ENCODE measurements at regions of chr17 and their contacts with region 1.

Region 1: DNA sequence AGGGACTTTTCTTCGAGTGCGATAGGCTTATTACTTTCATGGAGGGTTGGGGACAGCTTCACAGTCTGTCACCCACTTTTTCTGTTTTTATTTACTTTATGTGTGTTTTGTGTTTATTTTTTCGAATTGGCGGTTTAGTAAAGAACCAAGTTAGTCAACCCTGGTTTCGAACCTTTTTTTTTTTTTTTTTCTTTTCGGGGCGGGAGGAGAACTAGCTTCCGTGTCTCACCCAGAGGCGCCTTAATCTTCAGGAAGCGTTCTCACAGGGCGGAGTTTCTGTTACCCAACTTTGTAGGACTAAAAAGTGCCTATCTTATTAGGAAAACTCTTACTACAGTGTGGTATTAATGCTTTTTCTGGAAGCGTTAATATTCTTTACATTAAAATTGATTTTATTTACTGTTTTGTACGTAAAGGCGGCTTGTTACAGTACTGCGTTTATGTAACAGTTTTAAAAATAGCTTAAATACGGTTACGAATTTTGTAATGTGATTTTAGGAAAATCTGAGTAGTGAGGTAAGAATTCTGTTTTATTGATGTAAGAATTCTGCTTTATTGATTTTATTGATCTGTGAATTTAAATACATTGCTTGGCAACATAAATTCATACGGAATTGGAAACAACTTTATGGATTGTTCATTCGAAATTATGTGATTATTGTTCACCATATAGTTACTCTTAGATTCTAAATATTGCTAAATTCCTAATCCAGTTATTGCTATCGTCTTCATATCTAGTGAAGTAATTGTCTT is 885 bp downstream of the ZNF207 start:
- DNase-seq: peak; percentile 62
- ATAC-seq: peak; percentile 1; the same call in 1 of the 2 replicates
- H3K4me3 ChIP-seq: peak overlapping the region; percentile 78
- H3K27ac ChIP-seq: peak overlapping the region; percentile 94
- H3K4me1 ChIP-seq: peaks cover 6% of the 10 kb centered on the region
- H3K27me3 ChIP-seq: no peaks in the 10 kb centered on the region
- CTCF ChIP-seq: no peak
- POLR2A ChIP-seq: no peak
- RAD21 ChIP-seq: no peak

Region 2: DNA sequence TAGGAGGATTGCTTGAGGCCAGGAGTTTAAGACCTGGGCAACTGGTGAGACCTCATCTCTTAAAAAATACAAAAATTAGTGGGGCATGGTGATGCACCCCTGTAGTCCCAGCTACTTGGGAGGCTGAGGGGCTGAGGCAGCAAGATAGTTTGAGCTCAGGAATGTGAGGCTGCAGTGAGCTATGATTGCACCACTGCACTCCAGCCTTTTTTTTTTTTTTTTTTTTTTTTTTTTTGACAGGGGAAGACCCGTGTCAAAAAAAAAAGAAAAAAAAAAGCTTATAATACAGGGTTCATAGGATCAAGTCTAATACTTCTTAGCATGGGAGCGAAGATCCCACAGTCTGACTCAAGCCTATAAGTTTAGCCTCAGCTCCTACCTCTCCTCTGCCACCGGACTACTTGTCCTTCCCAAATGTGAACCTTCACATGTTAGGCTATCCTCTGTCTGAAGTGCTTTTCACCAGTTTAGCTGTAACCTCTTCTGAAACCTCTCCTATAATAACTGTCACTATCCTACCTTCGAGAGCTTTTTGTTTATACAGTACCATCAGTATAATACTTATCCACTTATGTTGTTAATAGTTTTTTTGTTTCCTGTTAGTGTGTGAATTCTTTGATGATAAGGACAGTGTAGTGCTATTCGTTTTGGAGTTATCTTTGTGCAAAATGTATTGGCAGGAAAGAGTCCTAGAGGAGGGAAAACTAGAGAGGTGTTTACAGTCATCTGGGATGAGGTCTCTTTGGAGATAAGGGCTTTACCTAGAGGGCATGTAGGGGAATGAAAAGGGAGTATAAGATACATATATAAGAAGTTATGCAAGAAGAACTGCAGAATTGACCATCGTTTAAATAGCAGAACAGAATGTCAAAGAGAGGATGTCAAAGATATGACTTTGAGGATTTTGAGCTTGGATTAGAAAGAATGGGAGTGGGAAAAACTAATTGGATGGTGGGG is 1956.7 kb before region 1 on chr17:
- CTCF ChIA-PET with region 1: no interaction called
- POLR2A ChIA-PET with region 1: interaction called, 10 read pairs
- dilution Hi-C with region 1: no loop called
- in situ Hi-C with region 1: no loop called
- intact Hi-C with region 1: no loop called
- DNase-seq: no peak
- ATAC-seq: no peak
- H3K4me3 ChIP-seq: no peak overlapping the region
- H3K27ac ChIP-seq: no peak overlapping the region
- H3K4me1 ChIP-seq: peaks cover 1% of the 10 kb centered on the region; the same call in 1 of the 2 replicates
- H3K27me3 ChIP-seq: no peaks in the 10 kb centered on the region
- CTCF ChIP-seq: no peak
- POLR2A ChIP-seq: no peak
- RAD21 ChIP-seq: no peak

Region 3: DNA sequence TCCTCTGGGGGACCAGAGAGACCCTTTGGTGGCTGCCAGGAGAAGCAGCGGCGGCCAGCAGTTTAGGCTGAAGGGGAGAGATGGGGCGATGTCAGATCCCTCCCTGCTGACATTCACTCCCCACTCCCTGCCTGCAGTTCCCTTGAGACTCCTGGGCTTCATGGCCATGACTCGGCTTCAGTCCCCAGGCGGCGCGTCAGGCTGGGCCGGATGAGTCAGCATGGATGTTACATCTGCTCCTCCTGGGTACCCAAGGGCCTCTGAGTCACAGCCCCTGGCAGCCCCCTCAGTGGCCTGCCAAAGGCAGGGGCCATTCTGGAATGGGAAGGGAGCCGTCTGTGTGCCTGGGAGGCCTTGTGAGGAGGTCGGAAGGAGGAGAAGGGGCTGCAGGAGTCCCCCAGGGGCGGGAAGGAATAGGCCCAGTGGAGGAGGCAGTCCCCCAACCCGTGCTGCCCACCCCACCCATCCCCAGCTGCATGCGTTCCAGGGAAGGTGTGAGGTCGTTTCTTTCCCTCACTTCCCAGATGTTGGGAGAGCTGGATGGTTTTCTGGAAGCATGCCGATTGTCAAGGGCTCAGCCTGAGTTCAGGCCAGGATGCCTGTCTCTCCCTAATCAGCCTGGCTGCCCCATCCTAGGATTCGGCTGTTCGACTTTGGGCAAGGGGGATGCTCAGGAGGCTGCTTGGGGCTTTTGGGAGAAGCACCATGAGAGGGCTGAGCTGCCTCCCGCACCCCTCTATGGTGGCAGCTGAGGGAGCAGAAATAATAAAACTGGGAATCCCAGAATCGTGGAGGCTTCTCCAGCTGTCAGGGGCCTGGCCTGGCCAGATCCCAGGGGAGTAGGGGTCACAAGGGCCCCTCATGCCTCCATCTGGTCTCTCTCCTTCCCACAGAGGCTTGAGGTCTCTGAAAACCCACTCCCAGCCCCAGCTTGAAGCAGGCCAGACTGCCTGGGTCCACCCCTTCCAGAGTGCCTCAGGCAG is 75.5 kb before region 1 on chr17:
- CTCF ChIA-PET with region 1: no interaction called
- POLR2A ChIA-PET with region 1: no interaction called
- dilution Hi-C with region 1: no loop called
- in situ Hi-C with region 1: no loop called
- intact Hi-C with region 1: no loop called
- DNase-seq: peak; percentile 90
- ATAC-seq: peak; percentile 97
- H3K4me3 ChIP-seq: no peak overlapping the region
- H3K27ac ChIP-seq: no peak overlapping the region
- H3K4me1 ChIP-seq: peaks cover 7% of the 10 kb centered on the region
- H3K27me3 ChIP-seq: peaks cover 27% of the 10 kb centered on the region
- CTCF ChIP-seq: 0 out of 2 replicates have a peak, but pooled peaks have one; percentile 1
- POLR2A ChIP-seq: no peak
- RAD21 ChIP-seq: no peak

Region 4: DNA sequence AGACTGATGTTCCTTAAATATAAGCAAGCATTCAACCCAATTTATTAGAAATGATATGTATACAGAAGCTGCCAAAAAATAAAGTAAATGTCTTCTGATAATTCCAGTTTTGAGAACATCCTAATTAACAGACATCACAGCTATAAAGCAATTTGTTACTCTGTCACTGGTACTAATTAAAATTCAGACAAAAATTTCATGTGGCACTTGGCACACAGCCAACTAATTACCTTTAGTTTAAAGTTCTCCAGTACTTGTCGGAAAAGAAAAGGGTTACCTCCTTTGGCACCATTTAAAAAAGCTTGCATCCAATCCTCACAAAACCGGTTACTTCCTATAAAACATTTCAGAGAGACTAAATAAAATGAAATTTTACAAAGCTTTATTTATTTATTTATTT is 17.7 kb before region 1 on chr17:
- CTCF ChIA-PET with region 1: no interaction called
- POLR2A ChIA-PET with region 1: interaction called, 12 read pairs
- dilution Hi-C with region 1: no loop called
- in situ Hi-C with region 1: no loop called
- intact Hi-C with region 1: no loop called
- DNase-seq: no peak
- ATAC-seq: no peak
- H3K4me3 ChIP-seq: no peak overlapping the region
- H3K27ac ChIP-seq: no peak overlapping the region
- H3K4me1 ChIP-seq: no peaks in the 10 kb centered on the region
- H3K27me3 ChIP-seq: no peaks in the 10 kb centered on the region
- CTCF ChIP-seq: no peak
- POLR2A ChIP-seq: no peak
- RAD21 ChIP-seq: no peak